Activated CD4-positive, alpha-beta T cell treated with anti-CD3 and anti-CD28 coated beads for 36 hours (primary cell): ENCODE measurements at regions of chr10 and their contacts with region 1.

Region 1: GRCh38 chr10:104353325-104354048 is at the start of gene CFAP58:
- DNase-seq: peak; percentile 94
- ATAC-seq: peak; percentile 77
- H3K4me3 Mint-ChIP-seq: peak within 1 kb of the TSS; percentile 11
- H3K27ac Mint-ChIP-seq: peak within 1 kb of the TSS; percentile 30
- H3K4me1 Mint-ChIP-seq: no peaks in the 10 kb centered on the region
- H3K27me3 Mint-ChIP-seq: no peaks in the 10 kb centered on the region
- total RNA-seq, gene CFAP58: 0.60 to 0.64 TPM

Region 2: GRCh38 chr10:103781329-103782061 is 572.0 kb before region 1 on chr10:
- CTCF ChIA-PET with region 1: no interaction called
- POLR2A ChIA-PET with region 1: no interaction called
- intact Hi-C with region 1: no loop called
- DNase-seq: peak; percentile 33
- ATAC-seq: peak; percentile 90
- H3K4me3 Mint-ChIP-seq: no peak overlapping the region
- H3K27ac Mint-ChIP-seq: no peak overlapping the region
- H3K4me1 Mint-ChIP-seq: peaks cover 3% of the 10 kb centered on the region
- H3K27me3 Mint-ChIP-seq: peaks cover 11% of the 10 kb centered on the region

Region 3: DNA sequence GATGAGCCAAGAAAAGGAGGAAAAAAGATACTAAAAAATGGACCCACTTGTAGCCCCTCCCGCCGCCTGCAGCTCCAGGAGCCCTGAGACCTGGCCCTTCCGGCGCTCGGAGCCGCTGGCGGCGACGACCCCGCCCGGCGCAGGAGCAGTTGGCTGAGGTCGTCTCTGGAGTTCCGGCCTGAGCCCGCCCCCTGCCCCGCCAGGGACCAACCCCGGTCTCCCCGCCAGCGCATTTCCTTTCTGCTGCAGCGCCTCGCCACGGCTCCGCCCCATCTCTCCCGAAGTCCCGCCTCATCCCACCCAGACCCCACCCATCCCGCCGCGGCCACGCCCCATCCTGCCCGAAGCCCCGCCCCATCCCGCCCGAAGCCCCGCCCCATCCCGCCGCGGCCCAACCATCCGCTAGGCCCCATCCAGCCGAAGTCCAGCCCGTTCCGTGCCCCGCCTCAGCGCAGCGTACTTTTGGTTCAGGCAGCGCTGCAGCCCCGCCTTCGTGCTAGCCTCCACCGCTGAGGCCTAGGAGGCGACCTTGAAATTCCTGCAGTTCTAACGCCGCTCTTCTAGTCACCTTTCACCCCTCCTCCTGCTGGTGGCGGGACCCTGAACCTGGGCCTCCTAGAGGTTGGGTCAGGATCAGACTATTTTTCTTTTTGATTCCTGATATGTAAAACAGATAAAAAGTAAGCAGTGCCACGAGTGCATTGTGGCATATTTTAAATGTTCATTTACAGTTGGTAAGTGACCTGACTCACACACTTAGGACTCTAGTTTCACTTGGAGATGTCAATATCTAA is 435.2 kb before region 1 on chr10 and contains the start of gene STN1:
- CTCF ChIA-PET with region 1: no interaction called
- POLR2A ChIA-PET with region 1: no interaction called
- intact Hi-C with region 1: loop called (anchors 1 to 5 kb)
- DNase-seq: peak; percentile 98
- ATAC-seq: peak; percentile 93
- H3K4me3 Mint-ChIP-seq: peak within 1 kb of the TSS; percentile 96
- H3K27ac Mint-ChIP-seq: peak within 1 kb of the TSS; percentile 99
- H3K4me1 Mint-ChIP-seq: peaks cover 32% of the 10 kb centered on the region
- H3K27me3 Mint-ChIP-seq: no peaks in the 10 kb centered on the region
- total RNA-seq, gene STN1: 34.4 to 37.4 TPM

Region 4: GRCh38 chr10:104268716-104269645 is 84.5 kb before region 1 on chr10 and contains the start of gene GSTO2:
- CTCF ChIA-PET with region 1: interaction called, 78 read pairs
- POLR2A ChIA-PET with region 1: interaction called, 3 read pairs
- intact Hi-C with region 1: loop called (anchors 1 kb)
- DNase-seq: peak; percentile 99
- ATAC-seq: peak; percentile 90
- H3K4me3 Mint-ChIP-seq: peak within 1 kb of the TSS; percentile 77
- H3K27ac Mint-ChIP-seq: peak within 1 kb of the TSS; percentile 94
- H3K4me1 Mint-ChIP-seq: peaks cover 42% of the 10 kb centered on the region
- H3K27me3 Mint-ChIP-seq: no peaks in the 10 kb centered on the region
- total RNA-seq, gene GSTO2: 2.1 to 2.8 TPM

Region 5: GRCh38 chr10:104284846-104285245 is 68.6 kb before region 1 on chr10:
- CTCF ChIA-PET with region 1: interaction called, 95 read pairs
- POLR2A ChIA-PET with region 1: no interaction called
- intact Hi-C with region 1: no loop called
- DNase-seq: no peak
- ATAC-seq: no peak
- H3K4me3 Mint-ChIP-seq: no peak overlapping the region
- H3K27ac Mint-ChIP-seq: no peak overlapping the region
- H3K4me1 Mint-ChIP-seq: no peaks in the 10 kb centered on the region
- H3K27me3 Mint-ChIP-seq: peaks cover 9% of the 10 kb centered on the region

Region 6: GRCh38 chr10:104308439-104308903 is 45.0 kb before region 1 on chr10:
- CTCF ChIA-PET with region 1: interaction called, 109 read pairs
- POLR2A ChIA-PET with region 1: interaction called, 5 read pairs
- intact Hi-C with region 1: loop called (anchors 1 kb)
- DNase-seq: peak; percentile 61
- ATAC-seq: peak; percentile 80
- H3K4me3 Mint-ChIP-seq: no peak overlapping the region
- H3K27ac Mint-ChIP-seq: peak overlapping the region; percentile 76
- H3K4me1 Mint-ChIP-seq: peaks cover 62% of the 10 kb centered on the region
- H3K27me3 Mint-ChIP-seq: no peaks in the 10 kb centered on the region

Region 7: DNA sequence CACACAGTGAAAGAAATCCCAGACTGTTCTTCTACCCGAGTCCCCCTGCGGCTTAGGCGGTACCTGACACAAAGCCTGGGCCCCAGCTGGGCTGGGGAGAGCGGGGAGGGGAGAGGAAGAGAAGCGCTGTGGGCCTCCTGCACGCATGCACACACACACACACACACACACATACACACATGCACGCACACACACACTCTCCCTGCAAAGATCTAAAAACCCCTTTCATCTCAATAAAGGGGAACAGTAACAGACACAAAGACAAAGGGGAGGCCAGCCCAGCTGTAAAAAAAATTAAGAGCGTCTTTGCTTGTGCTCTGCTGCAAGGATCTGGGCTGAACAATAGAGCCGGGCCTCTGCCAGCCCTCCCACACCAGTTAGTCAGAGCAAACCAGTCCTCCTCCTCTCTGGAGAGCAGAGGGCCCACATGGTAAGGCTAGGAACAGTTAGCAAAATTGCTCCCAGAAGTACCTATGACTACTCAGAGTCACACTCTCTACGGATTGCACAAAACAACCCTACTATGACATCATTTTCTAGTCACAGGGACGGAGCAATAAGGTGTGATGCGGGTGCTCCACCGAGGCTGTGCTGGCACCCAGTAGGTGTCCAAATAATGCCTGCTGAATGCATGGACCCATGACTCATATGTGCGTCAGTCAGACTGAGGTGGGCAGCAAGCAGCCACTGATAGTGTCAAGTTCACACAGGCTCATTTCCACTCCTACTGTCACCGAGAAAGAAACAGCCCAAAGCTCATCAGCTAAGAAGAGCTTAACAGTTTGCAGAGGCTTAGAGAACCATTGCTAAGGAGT is 24.4 kb before region 1 on chr10:
- CTCF ChIA-PET with region 1: interaction called, 27 read pairs
- POLR2A ChIA-PET with region 1: interaction called, 4 read pairs
- intact Hi-C with region 1: loop called (anchors 1 kb)
- DNase-seq: peak; percentile 89
- ATAC-seq: peak; percentile 92
- H3K4me3 Mint-ChIP-seq: peak overlapping the region; percentile 75
- H3K27ac Mint-ChIP-seq: peak overlapping the region; percentile 89
- H3K4me1 Mint-ChIP-seq: peaks cover 98% of the 10 kb centered on the region
- H3K27me3 Mint-ChIP-seq: no peaks in the 10 kb centered on the region